ENCODE measurements at regions of chr2 and their contacts with region 1.

Region 1: GRCh38 chr2:204108330-204108751 is 171.8 kb downstream of the ICOS start:
- DNase-seq: peak; percentile 18
- H3K4me3 Mint-ChIP-seq: peak overlapping the region; percentile 60
- H3K27ac Mint-ChIP-seq: peak overlapping the region; percentile 90
- H3K4me1 Mint-ChIP-seq: peaks cover 81% of the 10 kb centered on the region
- H3K27me3 Mint-ChIP-seq: no peaks in the 10 kb centered on the region

Region 2: DNA sequence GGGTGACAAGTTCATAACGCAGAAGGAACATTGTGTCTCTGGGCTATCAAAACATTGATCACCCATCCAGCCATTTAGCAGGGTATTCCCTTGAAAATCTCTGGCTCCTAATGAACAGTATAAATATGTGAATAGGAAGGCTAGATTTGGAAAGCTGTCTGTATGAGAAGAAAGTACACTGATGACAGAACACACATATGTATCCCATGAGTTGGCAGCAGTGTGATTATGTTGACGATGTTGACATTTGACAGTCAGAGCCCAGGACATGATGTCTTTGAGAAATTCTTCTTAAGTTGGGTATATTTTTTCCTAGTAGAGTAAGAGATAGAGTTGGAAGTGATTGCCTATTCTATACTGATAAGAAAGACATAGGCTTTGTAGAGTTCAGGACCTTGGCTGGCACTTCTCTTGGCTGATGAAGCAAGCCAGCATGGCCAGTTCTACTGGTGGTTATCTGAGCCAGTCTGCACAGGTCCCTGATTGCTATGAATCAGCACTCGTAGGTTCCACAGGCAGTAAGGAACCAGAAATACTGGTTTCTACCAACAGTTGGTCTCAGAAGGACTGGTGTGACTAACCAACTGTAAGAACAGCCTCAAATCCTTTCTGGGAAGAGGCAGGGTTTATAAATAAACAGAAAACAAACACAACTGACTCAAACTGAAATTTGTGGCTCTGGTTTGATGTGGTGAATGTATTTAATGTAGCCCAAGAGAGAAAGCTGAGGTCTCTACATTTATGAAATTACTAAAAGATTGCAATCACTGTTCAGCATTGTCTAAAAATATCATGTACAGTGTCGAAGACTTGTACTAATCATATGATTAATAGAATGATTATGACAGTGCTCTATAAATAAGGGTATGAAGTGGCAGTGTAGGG is 529.3 kb before region 1 on chr2:
- intact Hi-C with region 1: loop called (anchors 1 kb)
- DNase-seq: peak; percentile 64
- H3K4me3 Mint-ChIP-seq: peak overlapping the region; percentile 38
- H3K27ac Mint-ChIP-seq: peak overlapping the region; percentile 46
- H3K4me1 Mint-ChIP-seq: peaks cover 49% of the 10 kb centered on the region
- H3K27me3 Mint-ChIP-seq: peaks cover 40% of the 10 kb centered on the region

Region 3: GRCh38 chr2:203934041-203934492 is 174.3 kb before region 1 on chr2:
- intact Hi-C with region 1: loop called (anchors 1 kb)
- DNase-seq: peak; percentile 39
- H3K4me3 Mint-ChIP-seq: peak overlapping the region; percentile 73
- H3K27ac Mint-ChIP-seq: peak overlapping the region; percentile 93
- H3K4me1 Mint-ChIP-seq: peaks cover 59% of the 10 kb centered on the region
- H3K27me3 Mint-ChIP-seq: no peaks in the 10 kb centered on the region

Region 4: DNA sequence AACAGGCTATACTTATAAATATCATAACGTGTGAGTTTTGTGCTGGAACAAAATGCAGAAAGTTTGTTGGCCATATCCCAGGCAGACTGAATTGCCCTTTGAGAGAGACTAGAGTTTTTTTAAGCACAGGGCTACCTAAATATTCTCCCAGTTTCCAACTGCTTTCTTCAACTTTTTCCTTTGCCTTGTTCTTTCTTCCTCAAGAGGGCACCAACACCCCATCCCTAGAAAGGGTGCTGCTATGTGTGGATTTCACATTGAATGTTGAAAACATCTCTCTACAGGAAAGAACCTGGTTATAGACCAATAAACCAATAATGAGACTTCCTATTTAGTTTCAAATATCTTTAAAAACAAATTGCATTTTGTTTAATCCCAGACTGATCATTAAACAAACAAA is 83.8 kb before region 1 on chr2:
- intact Hi-C with region 1: loop called (anchors 1 kb)
- DNase-seq: no peak
- H3K4me3 Mint-ChIP-seq: no peak overlapping the region
- H3K27ac Mint-ChIP-seq: peak overlapping the region; percentile 32
- H3K4me1 Mint-ChIP-seq: peaks cover 75% of the 10 kb centered on the region
- H3K27me3 Mint-ChIP-seq: no peaks in the 10 kb centered on the region

Region 5: DNA sequence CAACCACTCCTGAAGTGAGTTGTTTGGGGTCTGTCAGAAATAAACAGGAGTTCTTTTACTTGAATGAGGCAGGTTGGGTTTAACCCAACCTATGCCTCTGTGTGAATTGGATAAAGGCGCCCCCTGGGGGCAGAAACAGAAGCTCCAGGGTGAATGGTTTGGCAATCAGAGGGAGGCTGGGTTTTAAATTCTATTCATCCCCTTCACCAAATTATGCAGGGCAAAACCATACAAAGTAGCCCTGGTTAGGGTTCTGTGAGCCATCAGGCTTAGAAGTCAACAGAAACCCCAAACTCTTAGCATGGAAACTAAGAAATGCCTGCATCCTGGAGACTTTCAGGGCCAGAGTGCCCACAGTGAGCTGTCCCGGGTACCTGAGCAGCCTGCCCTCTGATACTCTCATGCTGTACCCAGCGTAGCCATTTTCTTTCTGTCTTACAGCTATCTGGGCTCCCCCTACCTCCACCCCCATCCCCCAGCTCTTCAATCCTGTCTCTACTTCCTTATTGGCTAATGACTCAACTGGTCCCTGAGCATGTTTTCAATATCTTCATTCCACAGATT is 69.7 kb after region 1 on chr2:
- intact Hi-C with region 1: loop called (anchors 1 kb)
- DNase-seq: peak; percentile 51
- H3K4me3 Mint-ChIP-seq: no peak overlapping the region
- H3K27ac Mint-ChIP-seq: no peak overlapping the region
- H3K4me1 Mint-ChIP-seq: no peaks in the 10 kb centered on the region
- H3K27me3 Mint-ChIP-seq: peaks cover 17% of the 10 kb centered on the region

Region 6: DNA sequence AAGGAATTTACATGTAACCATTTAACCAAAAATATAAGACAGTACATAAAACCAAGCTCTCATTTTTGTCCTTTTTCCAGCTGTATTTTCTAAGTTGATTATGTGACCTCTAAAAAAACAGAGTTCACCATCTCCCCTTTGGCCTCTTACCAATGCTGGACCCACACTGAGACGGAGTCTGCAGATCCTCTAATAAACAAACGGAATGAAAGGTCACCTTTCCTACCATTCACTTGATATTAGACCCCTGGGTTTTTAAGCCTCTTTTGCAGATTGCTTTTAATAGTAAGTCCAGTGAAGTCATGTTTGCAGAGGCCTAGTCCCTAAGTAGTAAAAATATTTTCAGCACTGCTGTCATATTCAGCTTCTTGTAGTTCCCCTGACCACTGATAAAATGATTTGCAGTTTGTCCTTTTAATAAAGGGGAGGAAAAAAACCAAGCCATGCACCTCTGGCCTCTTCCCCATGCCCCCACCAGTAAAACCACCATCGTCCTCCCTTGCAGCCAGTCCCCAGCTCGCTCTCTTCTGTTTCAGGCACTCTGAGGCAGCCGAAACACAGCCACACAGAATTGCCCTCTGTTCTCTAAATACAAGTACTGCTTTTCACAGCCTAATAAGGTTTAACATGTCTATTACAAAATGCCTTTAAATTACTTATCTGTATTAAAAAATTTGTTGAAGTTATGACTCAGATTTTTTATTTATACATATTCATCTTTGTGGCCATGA is 864.4 kb after region 1 on chr2:
- intact Hi-C with region 1: loop called (anchors 1 kb)
- DNase-seq: no peak
- H3K4me3 Mint-ChIP-seq: no peak overlapping the region
- H3K27ac Mint-ChIP-seq: peak overlapping the region; percentile 49
- H3K4me1 Mint-ChIP-seq: peaks cover 38% of the 10 kb centered on the region
- H3K27me3 Mint-ChIP-seq: no peaks in the 10 kb centered on the region

Region 7: DNA sequence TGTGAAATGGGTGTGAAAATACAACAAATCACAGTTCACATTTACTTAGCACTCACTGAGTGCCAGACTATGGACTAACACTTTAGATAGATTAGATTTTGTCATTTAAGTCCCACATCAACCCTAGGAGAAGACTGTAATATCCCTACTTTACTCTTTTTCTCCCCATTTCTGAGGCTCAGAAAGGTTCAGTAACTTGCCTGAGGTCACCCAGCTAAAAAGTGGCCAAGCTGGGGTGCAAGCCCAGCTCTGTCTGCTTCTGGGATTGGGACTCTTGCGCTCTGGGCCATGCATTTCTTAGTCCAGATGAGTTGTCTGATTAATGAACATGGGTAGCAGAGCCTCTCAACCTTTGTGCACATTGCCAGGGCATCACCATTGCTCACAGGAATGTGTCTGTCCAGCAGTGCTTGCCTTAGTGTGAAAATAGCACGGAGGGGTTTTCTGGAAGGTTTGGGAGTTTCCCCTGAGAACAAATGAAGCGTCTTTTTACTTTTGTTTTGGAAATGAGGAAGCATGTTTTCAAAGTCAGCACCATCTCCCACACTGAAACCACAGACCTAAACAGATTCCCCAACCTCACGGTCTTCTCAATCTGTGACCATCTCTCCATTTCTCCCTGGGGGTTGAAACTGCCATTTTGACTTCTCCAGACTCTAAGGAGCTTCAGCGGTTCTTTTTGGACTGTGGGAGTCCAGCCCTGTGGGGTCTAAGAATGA is 1605.9 kb after region 1 on chr2:
- intact Hi-C with region 1: loop called (anchors 5 kb)
- DNase-seq: no peak
- H3K4me3 Mint-ChIP-seq: peak overlapping the region; percentile 5
- H3K27ac Mint-ChIP-seq: peak overlapping the region; percentile 25
- H3K4me1 Mint-ChIP-seq: peaks cover 78% of the 10 kb centered on the region
- H3K27me3 Mint-ChIP-seq: no peaks in the 10 kb centered on the region